A673 (cell line): ENCODE measurements at regions of chr18 and their contacts with region 1.

Region 1: DNA sequence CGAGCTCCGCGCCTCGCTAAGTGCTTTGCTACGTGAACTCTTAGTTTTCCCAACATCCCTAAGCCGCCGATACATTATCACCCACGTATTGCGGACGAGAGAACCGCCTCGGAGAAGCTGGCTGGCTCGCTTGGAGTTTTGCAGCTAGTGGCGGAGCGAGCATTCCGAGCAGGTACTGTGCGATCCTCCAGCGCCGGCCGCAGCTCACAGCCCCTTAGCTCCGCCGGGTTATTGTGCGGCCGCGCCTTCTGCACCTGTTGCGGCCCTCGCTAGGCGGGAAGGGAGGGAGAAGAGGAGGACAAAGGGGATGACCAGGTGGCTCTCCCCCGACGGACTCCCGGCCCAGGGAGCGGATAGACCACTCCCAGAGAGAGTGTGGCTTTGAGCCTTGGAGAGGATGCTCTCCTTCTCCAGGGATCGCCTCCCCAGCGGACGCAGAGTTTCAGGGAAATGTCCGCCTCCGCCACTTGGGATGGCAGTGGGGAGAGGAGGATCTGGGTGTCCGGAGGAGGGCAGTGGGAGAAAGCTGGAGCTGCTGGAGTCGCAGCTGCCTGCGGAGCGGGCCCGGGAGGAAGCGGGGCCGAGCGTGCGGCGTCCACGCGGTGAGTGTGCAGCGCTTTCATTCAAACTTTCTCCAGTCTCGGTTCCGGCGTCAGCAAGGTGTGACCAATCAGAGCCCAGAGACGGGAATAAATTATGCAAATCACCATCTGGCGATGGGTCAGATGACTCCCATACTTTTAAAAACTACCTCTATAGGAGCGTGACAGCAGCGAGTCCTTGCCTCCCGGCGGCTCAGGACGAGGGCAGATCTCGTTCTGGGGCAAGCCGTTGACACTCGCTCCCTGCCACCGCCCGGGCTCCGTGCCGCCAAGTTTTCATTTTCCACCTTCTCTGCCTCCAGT is at the start of gene LIPG:
- DNase-seq: peak; percentile 83
- H3K4me3 ChIP-seq: peak within 1 kb of the TSS; percentile 44
- H3K27ac ChIP-seq: no peak within 1 kb of the TSS
- H3K4me1 ChIP-seq: peaks cover 15% of the 10 kb centered on the region
- H3K27me3 ChIP-seq: peaks cover 27% of the 10 kb centered on the region
- CTCF ChIP-seq: no peak
- total RNA-seq, gene LIPG: 5.8 and 8.4 TPM in 2 replicates

Region 2: DNA sequence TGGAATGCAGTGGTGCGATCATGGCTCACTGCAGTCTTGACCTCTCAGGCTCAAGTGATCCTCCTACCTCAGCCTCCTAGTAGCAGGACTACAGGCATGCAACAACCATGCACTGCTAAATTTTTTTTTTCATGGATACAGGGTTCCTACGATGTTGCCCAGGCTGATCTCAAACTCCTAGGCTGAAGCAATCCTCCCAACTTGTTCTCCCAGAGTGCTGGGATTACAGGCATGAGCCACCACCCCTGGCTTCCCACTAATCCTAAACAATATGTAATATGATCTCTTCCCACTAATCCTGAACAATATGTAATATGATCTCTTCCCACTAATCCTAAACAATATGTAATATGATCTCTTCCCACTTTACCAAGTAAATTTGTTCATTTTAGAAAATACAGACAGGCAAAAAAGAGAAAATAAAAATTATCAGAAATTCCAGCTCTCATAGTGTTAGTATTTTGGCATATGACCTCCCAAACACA is 40.8 kb before region 1 on chr18:
- CTCF ChIA-PET with region 1: no interaction called
- POLR2A ChIA-PET with region 1: no interaction called
- intact Hi-C with region 1: no loop called
- DNase-seq: peak; percentile 69
- H3K4me3 ChIP-seq: no peak overlapping the region
- H3K27ac ChIP-seq: peak overlapping the region; percentile 71
- H3K4me1 ChIP-seq: peaks cover 37% of the 10 kb centered on the region
- H3K27me3 ChIP-seq: no peaks in the 10 kb centered on the region
- CTCF ChIP-seq: no peak

Region 3: GRCh38 chr18:49728542-49728941 is 167.0 kb after region 1 on chr18:
- CTCF ChIA-PET with region 1: interaction called, 4 read pairs
- POLR2A ChIA-PET with region 1: interaction called, 5 read pairs
- intact Hi-C with region 1: loop called (anchors 5 kb)
- DNase-seq: peak; percentile 83
- H3K4me3 ChIP-seq: no peak overlapping the region
- H3K27ac ChIP-seq: no peak overlapping the region
- H3K4me1 ChIP-seq: peaks cover 50% of the 10 kb centered on the region
- H3K27me3 ChIP-seq: no peaks in the 10 kb centered on the region
- CTCF ChIP-seq: peak; percentile 84

Region 4: DNA sequence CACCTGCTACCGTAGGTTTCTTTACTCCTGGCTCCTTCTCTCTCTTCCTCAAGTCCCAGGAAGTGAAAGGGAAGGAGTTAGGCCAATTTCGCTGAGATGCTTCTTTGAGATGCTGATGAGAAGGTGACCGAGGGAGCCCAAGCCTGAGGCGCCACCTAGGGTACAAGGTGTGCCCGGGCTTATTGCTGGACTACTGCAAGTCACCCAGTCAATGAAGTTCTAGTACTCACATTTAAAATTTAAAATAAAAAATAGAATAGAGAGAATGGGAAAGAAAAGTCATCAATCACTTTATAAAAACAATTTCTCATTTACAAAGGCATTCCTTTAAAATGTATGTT is 206.5 kb after region 1 on chr18:
- CTCF ChIA-PET with region 1: no interaction called
- POLR2A ChIA-PET with region 1: no interaction called
- intact Hi-C with region 1: loop called (anchors 1 kb)
- DNase-seq: peak; percentile 64
- H3K4me3 ChIP-seq: no peak overlapping the region
- H3K27ac ChIP-seq: no peak overlapping the region
- H3K4me1 ChIP-seq: no peaks in the 10 kb centered on the region
- H3K27me3 ChIP-seq: no peaks in the 10 kb centered on the region
- CTCF ChIP-seq: peak; percentile 68